ENCODE measurements at regions of chr9 and their contacts with region 1.

Region 1: GRCh38 chr9:121783521-121784507 is 132.4 kb downstream of the DAB2IP start:
- DNase-seq: no peak
- H3K4me3 ChIP-seq: no peak overlapping the region
- H3K27ac ChIP-seq: no peak overlapping the region
- H3K4me1 ChIP-seq: no peaks in the 10 kb centered on the region
- H3K27me3 ChIP-seq: no peaks in the 10 kb centered on the region
- CTCF ChIP-seq: no peak

Region 2: DNA sequence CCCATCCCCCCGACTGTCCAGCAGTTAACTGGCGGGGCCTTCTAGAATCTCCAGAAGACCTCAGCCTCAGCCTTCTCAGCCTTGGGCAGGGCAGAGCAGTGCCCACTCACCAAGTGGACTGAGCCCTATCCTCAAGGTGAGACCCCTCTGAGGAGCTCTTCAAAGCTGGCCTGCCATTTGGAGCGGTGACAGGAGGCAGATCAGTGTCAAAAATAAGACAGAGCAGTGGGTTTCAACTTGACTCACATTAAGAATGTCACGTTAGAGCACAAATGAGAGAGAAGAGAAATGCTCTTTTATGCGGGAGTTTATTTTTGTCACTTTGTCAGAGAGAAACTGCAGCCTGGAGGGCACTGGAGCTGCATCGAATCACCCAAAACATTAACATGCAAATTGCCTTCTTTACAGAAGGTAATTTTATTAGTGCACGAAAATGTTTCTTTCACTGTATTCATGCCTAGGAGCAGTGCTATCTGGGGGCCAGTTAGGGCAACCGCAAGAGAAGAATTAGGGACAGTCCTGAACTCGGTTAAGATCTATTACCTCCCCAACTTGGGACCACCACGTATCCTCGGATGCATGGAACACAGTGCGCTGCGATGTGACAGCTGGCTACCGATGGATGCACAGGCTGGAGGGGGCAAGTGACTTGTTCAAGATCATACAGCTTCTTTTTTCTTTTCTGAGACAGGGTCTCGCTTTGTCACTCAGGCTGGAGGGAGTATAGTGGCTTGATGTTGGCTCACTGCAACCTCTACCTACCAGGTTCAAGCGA is 56.1 kb after region 1 on chr9:
- CTCF ChIA-PET with region 1: no interaction called
- POLR2A ChIA-PET with region 1: no interaction called
- intact Hi-C with region 1: loop called (anchors 10 kb)
- DNase-seq: no peak
- H3K4me3 ChIP-seq: no peak overlapping the region
- H3K27ac ChIP-seq: no peak overlapping the region
- H3K4me1 ChIP-seq: no peaks in the 10 kb centered on the region
- H3K27me3 ChIP-seq: no peaks in the 10 kb centered on the region
- CTCF ChIP-seq: no peak